ENCODE measurements at regions of chr2 and their contacts with region 1.

Region 1: GRCh38 chr2:174577967-174578589 is 19.5 kb downstream of the WIPF1 start:
- DNase-seq: peak in 7 of 9 donors; percentile 55 to 77 (median 68)
- ATAC-seq: peak; percentile 86
- H3K4me3 ChIP-seq: no peak overlapping the region
- H3K4me3 Mint-ChIP-seq: peak overlapping the region in 1 of 10 donors; percentile 27
- H3K27ac ChIP-seq: peak overlapping the region; percentile 33
- H3K27ac Mint-ChIP-seq: peak overlapping the region in 8 of 9 donors; percentile 46 to 91 (median 81)
- H3K4me1 ChIP-seq: peaks cover 56 to 74% of the 10 kb centered on the region in 2 donors
- H3K4me1 Mint-ChIP-seq: peaks cover 31 to 91% (median 77%) of the 10 kb centered on the region in 7 donors
- H3K27me3 ChIP-seq: no peaks in the 10 kb centered on the region
- H3K27me3 Mint-ChIP-seq: no peaks in the 10 kb centered on the region

Region 2: GRCh38 chr2:174561283-174561971 is 16.7 kb before region 1 on chr2:
- CTCF ChIA-PET with region 1: interaction called, 8 read pairs
- POLR2A ChIA-PET with region 1: no interaction called
- intact Hi-C with region 1: loop called in 1 of 2 experiments (anchors 2 kb)
- DNase-seq: no peak
- ATAC-seq: no peak
- H3K4me3 ChIP-seq: no peak overlapping the region
- H3K4me3 Mint-ChIP-seq: no peak overlapping the region
- H3K27ac ChIP-seq: no peak overlapping the region
- H3K27ac Mint-ChIP-seq: peak overlapping the region; percentile 33 to 82 (median 63)
- H3K4me1 ChIP-seq: peaks cover 0 to 3% of the 10 kb centered on the region in 2 donors
- H3K4me1 Mint-ChIP-seq: peaks cover 4 to 13% (median 10%) of the 10 kb centered on the region in 7 donors
- H3K27me3 ChIP-seq: no peaks in the 10 kb centered on the region
- H3K27me3 Mint-ChIP-seq: no peaks in the 10 kb centered on the region

Region 3: DNA sequence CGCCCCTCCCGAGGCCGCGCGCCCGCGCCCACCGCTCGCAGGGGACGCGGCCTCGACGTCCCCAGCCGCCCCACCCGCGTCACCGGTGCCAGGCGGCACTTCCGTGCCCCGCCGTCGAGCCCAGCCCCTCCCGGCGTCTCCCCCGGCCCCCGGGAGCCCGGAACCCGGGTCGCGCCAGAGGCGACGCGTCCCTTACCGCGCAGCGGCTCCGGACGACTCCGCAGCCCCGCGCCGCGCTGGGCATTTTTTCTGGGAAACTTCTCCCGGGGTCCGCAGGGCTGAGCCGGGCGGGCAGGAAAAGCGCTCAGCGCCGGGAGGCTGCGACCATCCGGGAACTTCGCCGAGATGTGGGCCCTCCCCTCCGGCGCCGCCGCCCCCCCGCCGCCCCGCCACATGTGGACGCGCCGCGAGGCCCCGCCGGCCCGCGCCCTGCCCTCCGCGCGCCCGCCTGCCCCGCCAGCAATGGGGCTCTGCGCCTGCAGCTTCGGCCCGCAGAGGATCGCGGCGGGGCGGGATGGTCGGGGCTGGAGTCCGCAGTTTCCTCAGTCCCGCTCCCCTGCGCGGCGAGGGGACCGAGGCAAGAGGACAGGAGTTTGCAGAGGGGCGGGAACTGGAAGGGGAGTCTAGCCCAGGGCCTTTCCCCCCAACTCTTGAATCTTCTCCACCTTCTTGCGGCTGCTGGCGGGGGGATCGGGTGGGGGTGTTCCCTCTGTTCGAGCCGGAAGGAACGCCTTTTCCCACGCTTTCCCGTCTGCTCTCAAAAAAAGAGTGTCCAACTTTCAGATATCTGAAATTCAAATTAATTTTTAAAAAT is 104.7 kb after region 1 on chr2:
- CTCF ChIA-PET with region 1: interaction called, 66 read pairs
- POLR2A ChIA-PET with region 1: interaction called, 10 read pairs
- intact Hi-C with region 1: loop called in 1 of 2 experiments (anchors 1 kb)
- DNase-seq: peak; percentile 56 to 73 (median 71)
- ATAC-seq: peak; percentile 78
- H3K4me3 ChIP-seq: peak overlapping the region; percentile 72
- H3K4me3 Mint-ChIP-seq: peak overlapping the region; percentile 92 to 99 (median 96)
- H3K27ac ChIP-seq: peak overlapping the region; percentile 88
- H3K27ac Mint-ChIP-seq: peak overlapping the region; percentile 91 to 98 (median 96)
- H3K4me1 ChIP-seq: peaks cover 11% of the 10 kb centered on the region in 2 donors
- H3K4me1 Mint-ChIP-seq: peaks cover 34 to 69% (median 61%) of the 10 kb centered on the region in 7 donors
- H3K27me3 ChIP-seq: no peaks in the 10 kb centered on the region
- H3K27me3 Mint-ChIP-seq: no peaks in the 10 kb centered on the region

Region 4: DNA sequence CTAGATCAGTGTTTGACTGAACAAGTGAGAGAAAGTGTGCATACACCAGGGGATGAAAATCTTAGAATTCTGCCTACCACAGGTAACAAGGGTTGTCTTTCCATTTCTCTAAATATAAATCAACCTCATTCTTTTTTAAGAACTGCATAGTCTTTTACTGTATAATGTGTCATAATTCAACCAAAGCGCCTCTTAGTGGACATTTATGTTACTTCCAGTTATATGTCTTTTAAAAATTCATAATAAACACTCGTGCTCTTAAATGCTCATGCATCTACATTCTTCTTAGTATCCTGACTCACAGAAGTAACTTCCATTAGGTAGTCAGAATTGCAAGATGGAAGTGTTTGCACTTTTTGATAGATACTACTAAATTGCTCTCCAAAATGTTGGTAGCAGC is 110.0 kb after region 1 on chr2:
- CTCF ChIA-PET with region 1: interaction called, 66 read pairs
- POLR2A ChIA-PET with region 1: interaction called, 10 read pairs
- intact Hi-C with region 1: loop called (anchors 1 kb)
- DNase-seq: peak in 6 of 9 donors; percentile 36 to 63 (median 45)
- ATAC-seq: peak; percentile 73
- H3K4me3 ChIP-seq: no peak overlapping the region
- H3K4me3 Mint-ChIP-seq: peak overlapping the region in 1 of 10 donors; percentile 40
- H3K27ac ChIP-seq: no peak overlapping the region
- H3K27ac Mint-ChIP-seq: peak overlapping the region in 7 of 9 donors; percentile 14 to 82 (median 21)
- H3K4me1 ChIP-seq: peaks cover 0 to 6% of the 10 kb centered on the region in 2 donors
- H3K4me1 Mint-ChIP-seq: peaks cover 19 to 45% (median 30%) of the 10 kb centered on the region in 7 donors
- H3K27me3 ChIP-seq: no peaks in the 10 kb centered on the region
- H3K27me3 Mint-ChIP-seq: peaks cover 0 to 6% (median 0%) of the 10 kb centered on the region in 5 donors

Region 5: GRCh38 chr2:175004980-175005732 is 427.1 kb after region 1 on chr2 and contains the start of gene CHN1:
- CTCF ChIA-PET with region 1: no interaction called
- POLR2A ChIA-PET with region 1: no interaction called
- intact Hi-C with region 1: no loop called
- DNase-seq: peak; percentile 48 to 73 (median 63)
- ATAC-seq: peak; percentile 97
- H3K4me3 ChIP-seq: peak within 1 kb of the TSS; percentile 55
- H3K4me3 Mint-ChIP-seq: peak within 1 kb of the TSS; percentile 82 to 88 (median 84)
- H3K27ac ChIP-seq: no peak within 1 kb of the TSS
- H3K27ac Mint-ChIP-seq: peak within 1 kb of the TSS in 5 of 9 donors; percentile 12 to 41 (median 34)
- H3K4me1 ChIP-seq: peaks cover 0 to 6% of the 10 kb centered on the region in 2 donors
- H3K4me1 Mint-ChIP-seq: peaks cover 0 to 12% (median 5%) of the 10 kb centered on the region in 7 donors
- H3K27me3 ChIP-seq: peaks cover 9 to 14% of the 10 kb centered on the region in 2 donors
- H3K27me3 Mint-ChIP-seq: peaks cover 52 to 77% (median 59%) of the 10 kb centered on the region in 5 donors
- total RNA-seq, gene CHN1: 0.81 to 3.5 (median 2.3) TPM

Region 6: GRCh38 chr2:175439416-175439815 is 861.3 kb after region 1 on chr2:
- CTCF ChIA-PET with region 1: no interaction called
- POLR2A ChIA-PET with region 1: no interaction called
- intact Hi-C with region 1: no loop called
- DNase-seq: no peak
- ATAC-seq: no peak
- H3K4me3 ChIP-seq: no peak overlapping the region
- H3K4me3 Mint-ChIP-seq: no peak overlapping the region
- H3K27ac ChIP-seq: no peak overlapping the region
- H3K27ac Mint-ChIP-seq: no peak overlapping the region
- H3K4me1 ChIP-seq: no peaks in the 10 kb centered on the region
- H3K4me1 Mint-ChIP-seq: no peaks in the 10 kb centered on the region
- H3K27me3 ChIP-seq: no peaks in the 10 kb centered on the region
- H3K27me3 Mint-ChIP-seq: peaks cover 0 to 27% (median 10%) of the 10 kb centered on the region in 5 donors